ENCODE measurements at regions of chr3 and their contacts with region 1.

Region 1: DNA sequence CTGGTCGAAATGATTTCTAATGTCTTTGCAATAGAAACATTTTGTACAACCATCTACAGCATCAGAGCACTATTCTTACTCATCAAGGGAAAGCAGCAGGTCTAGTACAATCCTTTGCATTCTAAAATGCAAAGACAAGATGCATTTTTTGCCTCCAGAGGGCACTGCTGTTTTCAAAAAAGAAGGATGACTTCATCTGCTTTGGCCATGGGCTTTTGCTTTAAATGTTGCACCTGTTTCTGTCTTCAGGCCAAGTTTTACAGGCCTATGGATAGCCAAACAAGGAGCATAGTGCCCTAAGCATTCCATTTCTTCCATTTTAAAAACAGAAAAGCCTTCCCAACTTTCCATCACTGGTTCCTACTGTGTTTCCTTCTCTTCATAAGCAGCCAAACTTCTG is 3.4 kb downstream of the PARP9 start:
- DNase-seq: peak; percentile 57
- H3K27ac ChIP-seq: no peak overlapping the region
- CTCF ChIP-seq: no peak; the same call in 1 of the 2 replicates

Region 2: DNA sequence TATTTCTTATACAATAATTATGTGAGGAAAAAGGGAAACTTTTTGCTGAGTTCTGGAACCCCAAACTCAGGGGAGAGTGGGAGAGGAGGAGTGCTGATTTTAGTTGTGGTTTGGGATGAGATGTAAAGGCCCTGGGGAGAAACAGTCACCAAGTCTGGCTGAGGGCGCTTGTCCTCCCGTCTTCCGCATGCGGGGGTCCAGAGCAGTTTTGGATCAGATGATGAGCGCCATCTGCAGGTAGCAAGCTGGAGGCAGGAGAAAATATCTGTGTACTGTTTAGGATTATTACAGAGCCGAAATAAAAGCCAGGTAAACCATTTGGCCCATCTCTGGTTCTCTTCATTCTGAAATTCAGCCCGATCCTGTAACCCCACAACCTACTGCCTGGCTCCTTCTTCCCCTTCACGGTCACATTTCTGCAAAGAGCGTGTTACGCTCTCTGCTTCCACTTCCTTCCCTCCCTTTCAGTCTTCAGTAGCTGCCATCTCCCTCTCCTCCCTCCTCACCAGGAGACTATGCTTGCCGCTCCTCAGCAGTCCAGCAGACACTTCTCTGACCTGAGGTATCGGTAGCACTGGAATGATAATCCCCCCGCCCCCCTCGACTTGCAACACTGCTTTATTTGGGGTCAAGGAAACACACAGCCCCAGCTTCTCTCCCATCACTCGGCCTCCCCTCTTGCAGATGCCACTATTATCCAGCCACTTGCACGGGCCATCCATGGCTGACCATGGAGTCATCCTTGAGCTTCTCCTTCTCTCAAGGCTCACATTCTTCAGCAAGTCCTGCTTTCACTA is 118.6 kb after region 1 on chr3:
- CTCF ChIA-PET with region 1: interaction called, 23 read pairs
- POLR2A ChIA-PET with region 1: interaction called, 3 read pairs
- DNase-seq: peak; percentile 61
- H3K27ac ChIP-seq: peak overlapping the region; percentile 84
- CTCF ChIP-seq: peak; percentile 77

Measured in RWPE1 (cell line).